Activated naive CD4-positive, alpha-beta T cell treated with anti-CD3 and anti-CD28 coated beads for 36 hours (primary cell): ENCODE measurements at regions of chr6 and their contacts with region 1.

Region 1: DNA sequence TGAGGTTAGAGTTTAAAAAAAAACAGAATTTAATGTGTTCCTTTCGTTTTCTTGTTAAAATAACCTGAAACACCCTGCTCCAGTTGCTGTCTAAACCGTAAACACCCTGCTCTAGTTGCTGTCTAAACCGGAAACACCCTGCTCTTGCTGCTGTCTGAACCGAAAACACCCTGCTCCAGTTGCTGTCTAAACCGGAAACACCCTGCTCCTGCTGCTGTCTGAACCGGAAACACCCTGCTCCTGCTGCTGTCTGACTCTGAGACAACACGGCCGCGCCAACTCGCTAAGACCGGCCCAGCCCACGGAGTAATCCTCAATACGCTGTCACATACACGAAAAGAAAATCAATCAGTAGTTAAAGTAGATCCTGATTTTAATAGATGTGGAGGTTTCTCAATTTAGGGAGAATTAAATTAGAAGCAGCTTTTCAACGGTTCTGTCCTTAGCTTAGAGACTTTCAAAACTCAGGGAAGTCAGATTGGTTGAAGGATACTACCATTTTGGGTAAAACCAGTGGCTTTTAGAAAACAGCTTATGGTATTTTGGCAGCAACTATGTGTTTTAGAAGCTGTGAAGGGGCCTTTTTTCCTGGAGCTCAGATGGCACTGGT is 98.3 kb downstream of the RAMACL start:
- DNase-seq: peak; percentile 84
- H3K4me3 Mint-ChIP-seq: peak overlapping the region; percentile 76
- H3K27ac Mint-ChIP-seq: peak overlapping the region; percentile 97
- H3K4me1 Mint-ChIP-seq: peaks cover 20% of the 10 kb centered on the region
- H3K27me3 Mint-ChIP-seq: no peaks in the 10 kb centered on the region

Region 2: DNA sequence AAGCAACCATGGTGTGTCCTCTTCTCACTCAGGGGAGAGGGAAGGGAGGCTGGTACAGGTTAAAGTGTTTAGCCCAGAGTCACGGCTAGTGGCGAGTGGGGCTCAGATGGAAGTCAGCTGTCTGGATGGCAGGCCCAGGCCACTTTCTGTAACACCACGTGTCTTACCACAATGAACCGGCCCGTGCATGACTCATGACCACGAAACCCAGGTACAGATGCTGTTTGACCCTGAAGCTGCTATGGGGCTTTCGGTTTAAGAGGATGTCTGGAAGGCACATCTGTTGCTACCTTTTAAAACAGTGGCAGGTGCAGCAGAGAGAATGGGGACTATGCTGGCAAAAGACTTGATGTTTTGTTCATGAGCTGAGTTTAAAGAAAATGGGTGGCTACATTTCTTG is 68.9 kb before region 1 on chr6:
- CTCF ChIA-PET with region 1: no interaction called
- intact Hi-C with region 1: loop called (anchors 1 kb)
- DNase-seq: peak; percentile 74
- H3K4me3 Mint-ChIP-seq: no peak overlapping the region
- H3K27ac Mint-ChIP-seq: peak overlapping the region; percentile 60
- H3K4me1 Mint-ChIP-seq: peaks cover 60% of the 10 kb centered on the region
- H3K27me3 Mint-ChIP-seq: no peaks in the 10 kb centered on the region

Region 3: GRCh38 chr6:166499350-166500163 is 11.4 kb after region 1 on chr6:
- CTCF ChIA-PET with region 1: no interaction called
- intact Hi-C with region 1: loop called (anchors 1 kb)
- DNase-seq: peak; percentile 16
- H3K4me3 Mint-ChIP-seq: no peak overlapping the region
- H3K27ac Mint-ChIP-seq: no peak overlapping the region
- H3K4me1 Mint-ChIP-seq: peaks cover 18% of the 10 kb centered on the region
- H3K27me3 Mint-ChIP-seq: no peaks in the 10 kb centered on the region

Region 4: GRCh38 chr6:166586424-166587156 is 98.4 kb after region 1 on chr6 and contains the start of gene RAMACL:
- CTCF ChIA-PET with region 1: no interaction called
- intact Hi-C with region 1: loop called (anchors 5 kb)
- DNase-seq: peak; percentile 59
- H3K4me3 Mint-ChIP-seq: no peak within 1 kb of the TSS
- H3K27ac Mint-ChIP-seq: no peak within 1 kb of the TSS
- H3K4me1 Mint-ChIP-seq: peaks cover 23% of the 10 kb centered on the region
- H3K27me3 Mint-ChIP-seq: no peaks in the 10 kb centered on the region
- total RNA-seq, gene RAMACL: 0.52 to 0.89 TPM

Region 5: DNA sequence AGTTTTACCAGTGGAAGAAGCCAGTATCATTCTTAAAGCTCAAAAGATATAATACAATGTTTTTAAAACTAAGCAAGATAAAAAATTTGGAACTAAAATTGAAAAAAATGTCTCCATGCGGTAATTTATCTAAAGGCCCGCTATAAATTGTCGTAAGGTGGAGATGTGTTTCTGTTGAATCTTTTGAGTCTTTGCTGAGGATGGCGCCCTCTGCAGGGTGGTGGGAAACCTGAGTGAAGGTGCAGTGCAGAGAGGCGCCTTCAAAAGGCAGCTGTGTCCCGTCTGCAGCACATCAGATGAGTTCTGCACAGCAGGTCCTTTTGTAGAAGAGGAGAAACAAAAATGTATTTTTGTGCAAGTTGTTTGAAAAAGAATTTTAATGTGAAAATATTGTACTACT is 1479.9 kb after region 1 on chr6:
- CTCF ChIA-PET with region 1: no interaction called
- intact Hi-C with region 1: no loop called
- DNase-seq: peak; percentile 51
- H3K4me3 Mint-ChIP-seq: no peak overlapping the region
- H3K27ac Mint-ChIP-seq: no peak overlapping the region
- H3K4me1 Mint-ChIP-seq: no peaks in the 10 kb centered on the region
- H3K27me3 Mint-ChIP-seq: no peaks in the 10 kb centered on the region